ENCODE measurements at regions of chr14 and their contacts with region 1.

Region 1: DNA sequence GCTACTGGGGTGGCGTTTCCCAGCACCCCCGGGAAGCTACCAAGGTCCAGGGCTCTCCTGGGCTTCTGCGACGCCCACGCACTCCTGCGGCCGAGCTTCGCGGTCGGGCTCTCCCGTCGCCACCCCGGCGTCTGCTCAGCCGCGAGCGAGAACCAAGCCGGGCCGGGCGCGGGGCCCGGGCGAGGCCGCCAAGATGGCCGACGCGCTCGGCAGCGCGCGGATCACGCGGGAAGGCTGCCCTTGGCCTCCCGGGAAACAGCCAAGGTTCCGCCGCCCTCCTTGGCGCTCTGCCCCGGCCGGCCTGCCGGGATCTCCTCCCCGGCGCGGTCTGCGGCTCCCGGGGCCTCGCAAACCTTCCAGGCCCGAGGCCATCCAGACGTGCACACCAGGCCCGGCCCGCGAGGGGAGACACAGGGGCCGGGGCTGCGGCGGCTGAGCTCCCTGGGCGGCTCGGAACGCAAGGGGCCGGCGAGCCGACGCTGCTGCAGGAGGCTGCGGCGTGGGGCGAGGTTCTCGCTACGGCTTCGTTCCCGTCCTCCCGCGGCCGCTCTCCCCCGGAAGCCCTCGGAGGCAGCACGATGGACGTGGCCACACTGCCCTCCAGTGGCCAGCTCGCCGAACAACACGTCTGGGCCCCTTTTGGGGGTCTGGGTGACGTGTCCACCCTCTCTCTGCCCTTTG is 23.5 kb upstream of the ZFP36L1 start:
- DNase-seq: no peak
- H3K4me3 ChIP-seq: peak overlapping the region; percentile 49
- CTCF ChIP-seq: peak; percentile 96

Region 2: DNA sequence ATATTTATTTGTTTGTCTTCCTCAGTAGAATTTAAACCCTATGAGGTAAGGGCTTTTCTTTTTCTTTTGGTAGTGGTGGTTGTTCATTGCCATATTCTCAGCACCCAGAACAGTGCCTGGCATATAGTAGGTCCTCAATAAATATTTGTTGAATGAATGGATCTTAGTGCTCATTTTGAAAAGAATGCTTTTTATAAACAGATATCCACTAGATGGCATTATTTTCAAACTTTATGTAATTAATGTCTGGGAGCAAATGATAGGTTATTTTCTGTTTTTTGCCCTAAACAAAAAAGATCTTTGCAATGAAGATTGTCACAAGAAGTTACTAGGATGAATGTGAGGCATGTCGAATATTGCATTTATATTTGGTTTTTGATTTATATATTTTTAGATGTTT is 932.7 kb before region 1 on chr14:
- CTCF ChIA-PET with region 1: interaction called, 83 read pairs
- POLR2A ChIA-PET with region 1: no interaction called
- DNase-seq: no peak
- H3K4me3 ChIP-seq: no peak overlapping the region
- CTCF ChIP-seq: no peak

Region 3: DNA sequence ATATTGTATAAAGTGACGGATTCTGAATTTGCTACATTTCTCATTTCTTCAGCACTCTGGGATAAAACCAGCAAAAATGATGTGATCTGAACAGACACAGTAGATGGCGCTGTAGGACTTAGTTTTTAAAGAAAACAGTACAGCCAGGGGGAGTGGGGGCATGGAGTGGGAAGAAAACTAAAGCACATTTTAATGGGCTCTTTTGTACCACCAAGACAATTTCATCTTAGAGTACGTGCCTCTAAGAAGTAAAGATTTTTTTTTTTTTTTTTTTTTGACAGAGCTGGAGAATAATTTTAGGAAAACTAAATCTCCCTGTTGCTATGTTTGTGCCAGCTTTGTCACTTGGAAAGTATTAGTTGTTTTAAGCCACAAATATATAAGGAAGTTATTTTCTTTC is 872.5 kb before region 1 on chr14:
- CTCF ChIA-PET with region 1: interaction called, 58 read pairs
- POLR2A ChIA-PET with region 1: no interaction called
- DNase-seq: no peak
- H3K4me3 ChIP-seq: no peak overlapping the region
- CTCF ChIP-seq: peak; percentile 43

Region 4: DNA sequence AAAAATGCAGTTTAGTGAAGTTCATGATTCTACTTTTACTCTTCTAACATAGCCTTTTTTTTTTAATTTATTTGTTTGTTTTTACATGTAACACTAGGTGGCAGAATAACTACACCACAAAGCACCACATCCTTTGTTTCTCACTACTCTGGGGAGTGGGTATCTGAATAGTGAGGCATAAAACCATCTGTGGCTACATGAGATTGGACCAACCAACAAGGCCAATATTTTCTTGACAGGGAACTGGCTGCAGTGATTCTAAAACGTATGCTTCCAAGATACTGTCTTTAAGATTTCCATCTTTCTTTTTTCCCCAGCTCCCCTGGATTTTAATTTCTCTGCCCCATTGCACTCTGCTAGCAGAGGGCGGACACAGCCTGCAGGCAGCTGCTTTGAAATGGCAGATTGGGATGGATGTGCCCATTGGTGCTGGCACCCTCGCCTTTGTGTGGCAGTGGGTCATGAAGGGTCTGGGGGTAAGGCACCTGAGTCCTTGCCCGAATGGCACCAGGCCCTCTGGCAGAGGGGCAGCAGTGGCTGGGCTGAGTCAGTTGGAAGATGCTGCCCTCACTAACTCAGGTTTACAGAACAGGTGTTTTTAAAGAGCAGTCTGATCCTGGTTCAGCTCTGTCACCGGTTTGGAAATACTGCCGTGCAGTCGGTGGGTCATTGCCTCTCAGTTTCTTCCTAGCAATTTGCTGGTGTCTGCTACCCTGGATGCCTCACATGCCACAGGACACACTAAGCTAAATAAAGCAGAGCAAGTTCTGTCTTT is 567.7 kb before region 1 on chr14:
- CTCF ChIA-PET with region 1: interaction called, 184 read pairs
- POLR2A ChIA-PET with region 1: interaction called, 6 read pairs
- DNase-seq: no peak
- H3K4me3 ChIP-seq: no peak overlapping the region
- CTCF ChIP-seq: peak; percentile 21

Region 5: GRCh38 chr14:68795597-68796417 is 20.6 kb before region 1 on chr14:
- CTCF ChIA-PET with region 1: interaction called, 61 read pairs
- POLR2A ChIA-PET with region 1: interaction called, 50 read pairs
- DNase-seq: no peak
- H3K4me3 ChIP-seq: peak overlapping the region; percentile 99
- CTCF ChIP-seq: peak; percentile 80